ENCODE measurements at regions of chr14 and their contacts with region 1.

Region 1: GRCh38 chr14:21103710-21104447 is 3.0 kb downstream of the TMEM253 start:
- DNase-seq: peak; percentile 90
- ATAC-seq: peak; percentile 83
- H3K4me3 ChIP-seq: peak overlapping the region; percentile 69 to 74
- H3K27ac ChIP-seq: peak overlapping the region; percentile 95
- H3K4me1 ChIP-seq: peaks cover 56 to 80% of the 10 kb centered on the region in 2 experiments
- H3K27me3 ChIP-seq: no peaks in the 10 kb centered on the region
- CTCF ChIP-seq: peak in 2 of 3 experiments; percentile 68 to 76; a peak in 3 of 6 replicates
- POLR2A ChIP-seq: peak; percentile 64
- RAD21 ChIP-seq: no peak

Region 2: GRCh38 chr14:21092273-21093011 is 11.4 kb before region 1 on chr14:
- CTCF ChIA-PET with region 1: interaction called, 33 read pairs
- POLR2A ChIA-PET with region 1: interaction called, 5 read pairs
- RAD21 ChIA-PET with region 1: interaction called in 1 of 2 experiments, 6 read pairs
- intact Hi-C with region 1: no loop called
- DNase-seq: peak; percentile 40
- ATAC-seq: peak; percentile 85
- H3K4me3 ChIP-seq: no peak overlapping the region
- H3K27ac ChIP-seq: no peak overlapping the region; the same call in 1 of the 2 replicates
- H3K4me1 ChIP-seq: peaks cover 0 to 12% of the 10 kb centered on the region in 2 experiments
- H3K27me3 ChIP-seq: no peaks in the 10 kb centered on the region
- CTCF ChIP-seq: peak; percentile 99 to 100 (median 100)
- POLR2A ChIP-seq: no peak
- RAD21 ChIP-seq: peak; percentile 91